Panc1 (cell line): ENCODE measurements at regions of chr1 and their contacts with region 1.

Region 1: DNA sequence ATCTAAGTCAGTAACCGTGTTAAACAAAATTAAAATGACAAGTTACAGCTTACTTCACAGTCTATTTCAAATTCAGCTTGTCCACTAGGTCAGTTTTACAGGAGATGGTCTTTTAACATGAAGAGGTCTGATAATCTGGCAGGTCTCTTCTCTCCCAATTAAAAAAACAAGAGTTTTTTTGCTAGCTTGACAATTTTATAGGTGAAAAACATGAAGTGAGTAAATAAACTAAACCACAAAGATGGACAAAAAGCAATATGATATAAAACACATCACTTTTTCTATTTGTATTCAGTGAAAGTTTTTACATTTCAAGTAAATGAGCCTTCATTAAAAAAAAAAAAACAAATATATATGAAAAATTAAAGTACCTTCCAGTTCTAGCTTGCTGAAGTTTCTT is 25.0 kb upstream of the TTC39A start:
- DNase-seq: no peak
- ATAC-seq: no peak
- H3K4me3 ChIP-seq: no peak overlapping the region
- H3K27ac ChIP-seq: no peak overlapping the region
- H3K4me1 ChIP-seq: no peaks in the 10 kb centered on the region
- H3K27me3 ChIP-seq: no peaks in the 10 kb centered on the region
- CTCF ChIP-seq: no peak

Region 2: GRCh38 chr1:51340380-51340779 is 15.0 kb before region 1 on chr1:
- CTCF ChIA-PET with region 1: interaction called, 3 read pairs
- POLR2A ChIA-PET with region 1: interaction called, 11 read pairs
- in situ Hi-C with region 1: no loop called
- intact Hi-C with region 1: no loop called
- DNase-seq: no peak
- ATAC-seq: no peak
- H3K4me3 ChIP-seq: no peak overlapping the region
- H3K27ac ChIP-seq: no peak overlapping the region
- H3K4me1 ChIP-seq: no peaks in the 10 kb centered on the region
- H3K27me3 ChIP-seq: no peaks in the 10 kb centered on the region; the same call in 1 of the 2 replicates
- CTCF ChIP-seq: no peak